ENCODE measurements at regions of chr6 and their contacts with region 1.

Region 1: DNA sequence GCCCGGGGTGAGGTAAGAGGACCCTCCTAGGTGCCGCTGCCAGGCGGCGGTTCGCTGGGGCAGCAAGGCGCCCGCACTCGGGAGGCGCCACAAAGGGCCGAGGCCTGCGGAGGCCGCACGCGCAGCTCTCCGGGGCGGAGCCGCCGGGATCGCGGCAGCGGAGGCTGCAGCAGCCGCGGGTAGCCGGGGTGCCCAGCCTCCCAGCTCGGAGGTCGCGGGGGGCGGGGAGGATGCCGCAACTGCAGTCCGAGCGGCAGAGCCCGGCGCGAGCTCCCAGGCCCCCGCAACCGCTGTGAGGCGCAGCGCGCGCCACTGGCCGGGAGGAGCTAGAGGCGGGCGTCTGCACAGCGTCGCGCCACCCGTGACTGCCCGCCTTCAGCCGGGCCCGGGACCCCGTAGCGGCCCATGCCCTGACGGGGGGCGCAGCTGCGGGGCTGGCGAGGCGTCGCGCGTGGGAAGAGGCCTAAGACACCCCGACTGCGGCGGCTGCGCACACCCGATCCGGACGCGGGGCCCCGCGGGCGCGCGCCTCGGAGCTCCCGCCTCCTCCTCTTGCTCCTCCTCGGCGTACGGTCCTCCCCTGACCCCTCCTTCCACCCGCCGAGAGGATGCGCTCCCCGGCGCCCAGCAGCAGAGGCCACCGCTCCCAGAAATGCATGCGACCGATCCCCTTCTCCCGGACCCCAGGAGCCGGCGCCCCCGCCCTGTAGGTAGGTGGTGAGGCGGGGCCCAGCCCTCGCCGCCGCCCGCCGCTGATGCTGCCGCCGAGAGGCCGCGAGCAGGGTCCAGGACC is at the start of gene NCOA7:
- DNase-seq: peak; percentile 84
- H3K4me3 ChIP-seq: peak within 1 kb of the TSS; percentile 87 to 96 (median 87)
- H3K27ac ChIP-seq: peak within 1 kb of the TSS; percentile 81
- H3K4me1 ChIP-seq: peaks cover 42% of the 10 kb centered on the region
- H3K27me3 ChIP-seq: no peaks in the 10 kb centered on the region
- CTCF ChIP-seq: no peak
- POLR2A ChIP-seq: peak; percentile 83
- total RNA-seq, gene NCOA7: 58.2 and 71.2 TPM in 2 replicates

Region 2: GRCh38 chr6:125779924-125780539 is 10.5 kb before region 1 on chr6:
- CTCF ChIA-PET with region 1: interaction called, 19 read pairs
- POLR2A ChIA-PET with region 1: interaction called, 4 read pairs
- dilution Hi-C with region 1: no loop called
- intact Hi-C with region 1: loop called (anchors 1 kb)
- DNase-seq: peak; percentile 96
- H3K4me3 ChIP-seq: peak overlapping the region; percentile 62 to 95 (median 84)
- H3K27ac ChIP-seq: peak overlapping the region; percentile 94
- H3K4me1 ChIP-seq: peaks cover 8% of the 10 kb centered on the region
- H3K27me3 ChIP-seq: peaks cover 8 to 10% of the 10 kb centered on the region in 2 experiments
- CTCF ChIP-seq: peak in 1 of 2 donors; percentile 5
- POLR2A ChIP-seq: no peak

Region 3: DNA sequence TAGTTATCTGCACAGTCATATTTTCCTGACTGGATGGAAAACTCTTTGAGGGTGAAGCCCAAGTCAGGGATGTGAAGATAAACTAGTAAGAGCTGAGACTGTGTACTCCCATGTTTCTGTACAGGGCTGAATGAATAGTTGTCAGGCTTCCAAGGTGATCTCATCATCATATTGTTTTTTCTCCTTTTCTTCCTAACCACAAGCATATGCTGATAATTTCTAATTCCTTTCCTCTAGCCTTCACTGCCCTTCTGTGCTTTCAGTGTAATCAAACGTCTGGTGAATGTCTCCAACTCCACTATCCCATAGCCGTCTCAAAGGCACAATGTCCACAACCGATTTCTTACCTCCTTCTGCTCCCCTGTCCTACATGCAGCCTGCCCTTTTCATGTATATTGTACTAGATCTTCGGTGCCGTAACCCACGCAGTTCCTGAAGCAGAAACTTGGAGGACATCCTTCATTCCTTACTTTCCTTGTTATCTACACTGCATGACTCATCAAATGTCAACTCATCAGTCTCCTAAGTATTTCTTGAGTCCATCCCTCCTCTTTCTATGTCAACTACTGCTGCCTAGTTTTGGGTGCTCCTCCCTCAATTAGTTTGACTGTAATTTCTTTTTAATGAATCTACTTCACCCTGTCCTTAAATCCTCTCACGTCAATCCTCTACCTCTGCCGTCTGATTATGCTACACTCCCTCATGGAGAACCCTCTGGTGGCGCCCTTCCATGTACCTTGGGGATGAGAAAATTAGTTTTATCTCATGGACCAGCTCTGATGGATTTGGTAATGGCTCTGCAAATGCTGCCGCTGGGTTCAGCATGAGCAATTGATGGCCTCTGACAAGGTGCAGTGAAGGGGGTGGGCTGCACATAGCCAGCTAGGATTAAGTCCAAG is 22.1 kb after region 1 on chr6:
- CTCF ChIA-PET with region 1: interaction called, 47 read pairs
- POLR2A ChIA-PET with region 1: no interaction called
- dilution Hi-C with region 1: no loop called
- intact Hi-C with region 1: loop called (anchors 1 kb)
- DNase-seq: peak; percentile 98
- H3K4me3 ChIP-seq: peak overlapping the region in 1 of 3 experiments; percentile 31
- H3K27ac ChIP-seq: peak overlapping the region; percentile 94
- H3K4me1 ChIP-seq: peaks cover 46% of the 10 kb centered on the region
- H3K27me3 ChIP-seq: no peaks in the 10 kb centered on the region
- CTCF ChIP-seq: no peak
- POLR2A ChIP-seq: peak; percentile 37

Region 4: DNA sequence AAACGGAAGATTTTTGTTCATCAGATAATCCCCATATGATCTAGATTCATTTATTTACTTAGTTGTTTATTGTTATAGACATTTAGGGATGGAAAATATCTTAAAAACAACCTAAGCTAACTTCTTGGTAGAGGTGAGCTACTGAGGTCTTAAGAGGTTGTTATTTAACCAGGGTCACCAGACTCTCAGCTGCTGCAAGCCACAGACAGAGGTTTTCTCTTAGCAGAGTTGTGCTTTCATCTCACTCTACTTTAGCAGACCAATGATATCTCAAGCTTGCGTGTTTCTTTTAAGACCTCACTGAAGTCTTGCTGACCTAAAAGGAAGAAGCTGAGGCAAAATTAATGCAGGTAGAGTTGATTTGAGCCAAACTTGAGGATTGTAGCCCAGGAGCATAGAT is 43.8 kb after region 1 on chr6:
- CTCF ChIA-PET with region 1: interaction called, 40 read pairs
- POLR2A ChIA-PET with region 1: interaction called, 3 read pairs
- dilution Hi-C with region 1: no loop called
- intact Hi-C with region 1: loop called (anchors 5 kb)
- DNase-seq: peak; percentile 50
- H3K4me3 ChIP-seq: no peak overlapping the region
- H3K27ac ChIP-seq: no peak overlapping the region
- H3K4me1 ChIP-seq: peaks cover 28% of the 10 kb centered on the region
- H3K27me3 ChIP-seq: no peaks in the 10 kb centered on the region
- CTCF ChIP-seq: no peak
- POLR2A ChIP-seq: no peak

Region 5: GRCh38 chr6:125858427-125859320 is 68.1 kb after region 1 on chr6:
- CTCF ChIA-PET with region 1: interaction called, 67 read pairs
- POLR2A ChIA-PET with region 1: no interaction called
- dilution Hi-C with region 1: no loop called
- intact Hi-C with region 1: loop called (anchors 5 kb)
- DNase-seq: peak; percentile 68
- H3K4me3 ChIP-seq: no peak overlapping the region
- H3K27ac ChIP-seq: no peak overlapping the region
- H3K4me1 ChIP-seq: no peaks in the 10 kb centered on the region
- H3K27me3 ChIP-seq: no peaks in the 10 kb centered on the region
- CTCF ChIP-seq: peak; percentile 69 to 73
- POLR2A ChIP-seq: no peak

Region 6: GRCh38 chr6:125888989-125889656 is 98.6 kb after region 1 on chr6:
- CTCF ChIA-PET with region 1: interaction called, 38 read pairs
- POLR2A ChIA-PET with region 1: interaction called, 10 read pairs
- dilution Hi-C with region 1: no loop called
- intact Hi-C with region 1: loop called (anchors 2 kb)
- DNase-seq: peak; percentile 71
- H3K4me3 ChIP-seq: no peak overlapping the region
- H3K27ac ChIP-seq: no peak overlapping the region
- H3K4me1 ChIP-seq: no peaks in the 10 kb centered on the region
- H3K27me3 ChIP-seq: no peaks in the 10 kb centered on the region
- CTCF ChIP-seq: peak; percentile 40 to 49
- POLR2A ChIP-seq: no peak

Region 7: GRCh38 chr6:125944434-125944816 is 153.9 kb after region 1 on chr6:
- CTCF ChIA-PET with region 1: interaction called, 16 read pairs
- POLR2A ChIA-PET with region 1: interaction called, 3 read pairs
- dilution Hi-C with region 1: no loop called
- intact Hi-C with region 1: no loop called
- DNase-seq: peak; percentile 98
- H3K4me3 ChIP-seq: no peak overlapping the region
- H3K27ac ChIP-seq: peak overlapping the region; percentile 89
- H3K4me1 ChIP-seq: peaks cover 40% of the 10 kb centered on the region
- H3K27me3 ChIP-seq: no peaks in the 10 kb centered on the region
- CTCF ChIP-seq: no peak
- POLR2A ChIP-seq: no peak

Measured in endothelial cell of umbilical vein (primary cell).